AG04449 (cell line): ENCODE measurements at regions of chr19 and their contacts with region 1.

Region 1: GRCh38 chr19:11435058-11435832 is at the starts of genes ODAD3 and PRKCSH:
- DNase-seq: peak; percentile 97
- H3K4me3 ChIP-seq: peak within 1 kb of the TSS; percentile 98
- CTCF ChIP-seq: peak; percentile 83

Region 2: DNA sequence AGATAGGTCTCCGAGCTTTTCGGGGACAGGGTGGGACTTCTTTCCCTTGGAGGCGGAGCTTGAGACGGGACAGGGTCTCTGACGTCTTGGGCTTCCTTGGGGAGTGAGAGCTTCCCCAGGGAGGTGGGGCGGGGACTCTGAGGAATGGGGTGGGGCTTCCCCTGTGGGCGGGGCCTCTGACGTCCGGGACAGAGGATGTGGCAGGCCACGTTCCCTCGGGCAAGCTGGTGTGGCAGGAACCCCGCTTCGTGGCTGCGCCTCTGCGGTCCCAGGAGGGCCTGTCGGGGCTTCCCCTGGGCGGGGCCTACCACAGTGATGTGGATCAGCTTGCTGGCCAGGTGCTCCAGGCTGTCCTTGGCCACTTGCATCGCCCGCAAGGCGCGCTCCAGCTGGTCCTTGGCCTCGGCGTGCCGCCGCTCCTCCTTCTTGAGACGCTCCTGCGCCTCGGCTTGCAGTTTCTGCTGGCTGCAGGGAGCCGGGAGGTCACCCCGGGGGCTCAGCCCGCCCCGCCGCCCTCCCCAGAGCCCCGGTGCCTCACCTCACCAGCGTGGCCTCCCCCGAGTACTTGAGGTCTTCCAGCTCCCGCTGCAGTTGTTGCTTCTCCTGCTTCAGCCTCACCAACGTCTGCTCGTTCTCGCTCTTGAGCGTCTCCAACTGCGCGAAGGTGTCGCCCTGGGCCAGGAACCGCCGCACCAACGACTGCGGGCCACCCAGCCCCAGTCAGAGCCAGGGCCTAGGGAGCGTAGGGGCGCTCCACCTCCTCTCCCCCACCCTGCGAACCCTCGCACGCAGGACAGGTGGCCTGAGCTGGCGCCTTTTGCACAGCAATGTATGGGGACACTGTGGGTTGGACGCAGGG is 12.9 kb before region 1 on chr19:
- CTCF ChIA-PET with region 1: interaction called, 16 read pairs
- POLR2A ChIA-PET with region 1: no interaction called
- DNase-seq: no peak
- H3K4me3 ChIP-seq: peak overlapping the region; percentile 20
- CTCF ChIP-seq: no peak

Region 3: DNA sequence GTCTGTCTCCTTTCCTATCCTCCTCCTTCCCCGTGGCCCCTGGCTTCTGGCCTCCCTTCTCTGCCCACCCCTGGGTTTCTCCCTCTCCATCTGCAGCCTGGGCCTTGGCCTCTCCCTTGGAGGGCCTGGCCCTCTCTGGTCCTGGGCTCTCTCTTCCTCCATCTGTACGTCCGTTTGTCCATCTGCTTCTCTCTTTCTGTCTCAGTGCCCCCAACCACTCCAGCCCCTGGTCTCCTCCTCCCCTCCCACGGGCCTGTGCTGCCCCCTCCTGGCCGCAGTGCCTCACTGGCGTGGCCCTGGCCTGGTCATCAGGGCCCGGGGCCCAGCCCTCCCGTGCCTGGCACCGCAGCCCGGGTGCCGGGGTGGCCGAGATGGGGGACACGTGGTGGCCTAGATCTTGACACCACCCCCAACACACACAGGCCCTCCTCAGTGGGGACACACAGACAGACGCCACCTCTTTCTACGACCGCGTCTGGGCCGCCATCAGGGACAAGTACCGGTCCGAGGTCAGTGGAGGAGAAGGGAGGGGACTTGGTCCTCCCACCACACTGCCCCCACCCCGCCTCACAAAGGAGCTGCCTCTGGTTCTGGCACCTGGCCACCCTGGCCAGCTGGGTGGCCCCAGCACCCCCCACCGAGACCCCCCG is 11.5 kb after region 1 on chr19:
- CTCF ChIA-PET with region 1: interaction called, 20 read pairs
- POLR2A ChIA-PET with region 1: no interaction called
- DNase-seq: no peak
- H3K4me3 ChIP-seq: no peak overlapping the region
- CTCF ChIP-seq: peak; percentile 84